Dorsolateral prefrontal cortex (tissue), 120 donors: ENCODE measurements at regions of chr1 and their contacts with region 1.

Region 1: DNA sequence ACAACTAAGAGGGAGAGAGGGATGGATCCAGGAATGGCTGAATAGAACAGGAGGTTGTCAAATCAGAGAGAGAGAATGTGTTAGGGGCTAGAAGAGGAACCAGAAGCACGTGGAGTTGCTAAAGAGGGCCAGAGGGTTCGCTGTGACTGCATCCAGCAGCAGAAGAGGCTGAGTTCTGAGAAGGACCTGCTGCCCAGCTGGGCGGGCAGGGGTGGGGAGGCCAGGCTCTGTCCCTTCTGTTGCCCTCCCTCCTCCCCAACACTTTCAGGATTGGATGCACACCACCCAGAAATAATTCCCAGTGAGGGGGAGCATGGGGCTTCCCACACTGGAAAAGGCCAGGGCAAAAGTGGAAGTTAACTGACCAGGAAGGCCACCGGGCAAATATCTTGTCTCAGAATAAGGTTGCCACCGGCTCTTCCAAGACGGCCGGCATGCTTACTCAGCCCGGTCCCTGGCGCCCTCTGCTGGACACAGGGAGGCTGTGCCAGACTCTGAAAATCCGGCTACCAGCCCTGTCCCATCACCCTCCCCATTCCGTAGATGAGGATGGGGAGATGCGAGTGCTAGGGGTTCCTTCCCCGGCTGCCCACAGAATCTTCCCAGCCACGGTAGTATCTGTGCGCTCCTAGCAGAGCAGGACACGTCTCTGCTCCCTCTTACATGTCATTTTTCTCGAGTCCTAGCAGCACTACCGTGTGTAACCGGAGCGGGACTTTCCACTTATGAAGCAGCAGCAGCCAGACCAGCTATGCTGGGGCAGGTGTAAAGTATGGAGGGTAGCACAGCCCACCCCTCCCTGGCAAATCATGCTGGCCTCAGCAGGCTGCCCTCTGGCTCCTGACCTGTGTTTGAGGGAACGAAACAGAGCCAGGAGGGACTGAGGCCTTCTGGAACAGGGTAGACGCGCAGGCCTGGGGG is 46.8 kb upstream of the A3GALT2 start:
- DNase-seq: peak; percentile 84 to 95 (median 90)
- H3K4me3 ChIP-seq: peak overlapping the region in 9 of 59 donors; percentile 4 to 39 (median 15)
- H3K27ac ChIP-seq: peak overlapping the region in 58 of 59 donors; percentile 2 to 100 (median 96)
- H3K27me3 ChIP-seq: no peaks in the 10 kb centered on the region
- CTCF ChIP-seq: peak; percentile 81 to 99 (median 98)

Region 2: GRCh38 chr1:33147997-33148314 is 219.8 kb before region 1 on chr1:
- intact Hi-C with region 1: loop called in 1 of 2 experiments (anchors 10 kb)
- DNase-seq: no peak
- H3K4me3 ChIP-seq: no peak overlapping the region
- H3K27ac ChIP-seq: peak overlapping the region in 4 of 59 donors; percentile 8 to 26 (median 17)
- H3K27me3 ChIP-seq: no peaks in the 10 kb centered on the region
- CTCF ChIP-seq: peak in 31 of 56 donors; percentile 10 to 56 (median 26)

Region 3: GRCh38 chr1:33219881-33220661 is 147.7 kb before region 1 on chr1:
- intact Hi-C with region 1: loop called in 1 of 2 experiments (anchors 5 kb)
- DNase-seq: no peak
- H3K4me3 ChIP-seq: no peak overlapping the region
- H3K27ac ChIP-seq: no peak overlapping the region
- H3K27me3 ChIP-seq: no peaks in the 10 kb centered on the region
- CTCF ChIP-seq: no peak

Region 4: DNA sequence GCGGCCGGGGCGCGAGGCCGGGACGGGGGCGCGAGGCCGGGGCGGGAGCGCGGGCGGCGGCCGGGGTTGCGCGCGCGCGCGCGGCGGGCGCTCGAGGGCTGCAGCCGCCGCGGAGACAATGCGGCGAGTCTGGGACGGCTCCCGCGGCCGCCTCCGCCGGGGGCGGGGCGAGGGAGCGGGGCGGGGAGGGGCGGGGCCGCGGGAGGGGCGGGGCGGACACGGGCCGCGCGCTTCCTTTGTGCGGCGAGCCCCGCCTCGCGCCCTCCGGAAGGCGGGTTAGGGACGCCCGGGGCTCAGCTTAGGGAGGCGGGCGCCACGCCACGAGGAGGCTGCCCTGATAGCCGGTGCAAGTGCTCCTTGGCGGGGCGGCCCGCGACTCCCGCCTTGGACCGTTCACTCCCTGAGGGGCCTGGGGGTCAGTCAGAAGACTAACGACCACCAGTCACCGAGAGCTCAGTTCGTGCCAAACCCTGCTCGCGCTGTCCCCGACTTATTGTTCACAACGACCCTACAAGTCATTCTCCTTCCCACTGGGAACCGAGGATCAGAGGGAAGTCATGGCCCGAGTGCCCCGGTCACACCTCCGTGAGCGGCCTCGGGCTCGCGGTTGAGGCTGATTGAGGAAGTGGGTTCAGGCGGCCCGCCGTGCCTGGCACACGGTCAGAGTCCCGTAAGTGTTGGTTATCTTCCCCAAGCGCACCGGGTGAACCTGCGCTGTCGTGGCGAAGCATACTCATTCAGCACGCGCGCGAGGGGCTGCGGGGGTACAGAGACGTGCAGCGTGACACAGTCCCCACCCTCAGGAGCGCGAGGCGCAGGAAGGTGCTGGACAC is 17.8 kb before region 1 on chr1:
- intact Hi-C with region 1: loop called in 1 of 2 experiments (anchors 2 kb)
- DNase-seq: peak; percentile 70 to 88 (median 80)
- H3K4me3 ChIP-seq: peak overlapping the region; percentile 41 to 94 (median 75)
- H3K27ac ChIP-seq: peak overlapping the region; percentile 59 to 99 (median 92)
- H3K27me3 ChIP-seq: no peaks in the 10 kb centered on the region
- CTCF ChIP-seq: peak in 22 of 56 donors; percentile 4 to 34 (median 14)

Region 5: GRCh38 chr1:33472349-33472980 is 104.7 kb after region 1 on chr1 and contains the start of gene ZSCAN20:
- intact Hi-C with region 1: loop called (anchors 5 kb)
- DNase-seq: peak; percentile 99 to 100 (median 99)
- H3K4me3 ChIP-seq: peak within 1 kb of the TSS; percentile 49 to 86 (median 72)
- H3K27ac ChIP-seq: peak within 1 kb of the TSS in 57 of 59 donors; percentile 3 to 92 (median 78)
- H3K27me3 ChIP-seq: no peaks in the 10 kb centered on the region
- CTCF ChIP-seq: peak in 48 of 56 donors; percentile 16 to 70 (median 42)
- total RNA-seq, gene ZSCAN20: 4.8 to 12.9 (median 8.1) TPM